Left ventricle myocardium superior (tissue), 1 donor: ENCODE measurements at regions of chr1 and their contacts with region 1.

Region 1: DNA sequence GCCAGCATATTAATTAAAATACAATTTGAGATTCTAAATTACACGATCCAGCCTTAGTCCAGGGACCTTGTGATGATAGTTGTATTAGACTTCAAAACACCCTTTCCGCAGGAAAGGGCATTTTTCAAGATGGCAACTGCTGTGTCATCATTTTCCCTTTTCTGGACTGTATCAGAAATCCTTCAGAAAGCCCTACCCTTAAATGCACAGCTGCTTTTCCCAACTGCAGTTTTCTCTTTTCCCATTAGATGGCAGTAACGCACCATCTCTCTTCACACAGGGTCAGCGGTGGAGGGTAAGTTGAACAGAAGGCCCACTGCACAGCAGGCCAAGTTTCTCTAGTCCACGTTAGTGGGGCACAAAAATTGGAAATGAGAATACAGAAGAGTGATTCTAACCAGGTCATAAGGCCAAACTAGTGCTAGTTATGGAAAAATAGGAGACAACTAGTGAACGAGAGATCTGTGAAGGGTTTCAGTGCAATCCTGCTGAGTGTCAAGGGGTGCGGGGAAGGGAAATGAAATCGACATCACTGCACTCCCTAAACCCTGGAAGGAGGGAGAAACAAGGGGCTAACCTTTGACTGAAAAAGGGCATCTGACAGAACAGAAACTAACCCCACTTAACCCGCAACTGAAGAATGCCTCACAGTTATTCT is 22.1 kb upstream of the TDRD10 start:
- DNase-seq: no peak
- ATAC-seq: peak; percentile 91

Region 2: GRCh38 chr1:154546264-154547063 is 66.6 kb after region 1 on chr1:
- intact Hi-C with region 1: loop called (anchors 5 kb)
- DNase-seq: peak; percentile 65
- ATAC-seq: peak; percentile 75

Region 3: DNA sequence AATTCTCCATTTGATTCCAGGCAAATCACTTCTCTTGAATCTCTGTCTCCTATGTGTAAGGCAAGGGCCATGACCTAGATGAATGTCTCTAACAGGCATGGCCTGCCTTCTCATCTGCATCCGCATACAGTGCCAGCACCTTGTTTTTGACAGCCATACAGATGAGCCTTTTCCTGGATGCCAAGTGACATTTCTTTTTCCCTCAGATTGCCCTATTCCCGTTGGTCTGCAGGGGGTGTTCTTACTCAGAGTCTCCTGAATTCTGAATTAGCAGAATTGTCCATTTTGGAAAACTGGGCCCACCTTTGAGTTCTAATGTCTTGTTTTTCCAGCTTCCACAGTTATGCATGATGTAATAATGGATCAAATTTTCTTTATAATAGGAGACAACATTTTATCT is 216.1 kb after region 1 on chr1:
- intact Hi-C with region 1: no loop called
- DNase-seq: no peak
- ATAC-seq: peak; percentile 31